ENCODE measurements at regions of chr6 and their contacts with region 1.

Region 1: GRCh38 chr6:41367700-41368099 is 32.3 kb downstream of the NCR2 start:
- DNase-seq: peak; percentile 68
- H3K27ac ChIP-seq: no peak overlapping the region
- CTCF ChIP-seq: peak; percentile 50

Region 2: DNA sequence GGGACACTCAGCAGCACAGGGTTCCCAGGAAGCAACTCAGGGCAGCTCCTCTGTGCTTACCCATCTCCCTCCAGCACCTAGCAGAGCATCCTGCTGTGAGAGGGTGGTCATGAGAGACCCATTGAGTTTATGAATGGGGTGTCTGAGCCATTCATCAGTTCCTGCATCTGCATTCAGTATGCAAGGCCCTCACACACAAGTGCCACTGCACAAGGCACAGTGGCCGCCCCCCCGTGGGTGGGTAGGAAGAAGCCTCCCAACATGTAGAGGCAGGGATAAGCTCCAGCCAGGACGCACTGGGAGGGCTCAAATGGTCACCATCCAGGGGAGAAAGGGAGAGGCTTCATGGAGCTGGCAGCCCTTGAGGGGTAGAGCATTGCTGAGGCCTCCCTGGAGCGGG is 221.5 kb after region 1 on chr6:
- CTCF ChIA-PET with region 1: interaction called, 12 read pairs
- POLR2A ChIA-PET with region 1: no interaction called
- DNase-seq: no peak
- H3K27ac ChIP-seq: no peak overlapping the region
- CTCF ChIP-seq: no peak

Region 3: GRCh38 chr6:41683510-41684310 is 316.0 kb after region 1 on chr6:
- CTCF ChIA-PET with region 1: interaction called, 14 read pairs
- POLR2A ChIA-PET with region 1: no interaction called
- DNase-seq: peak; percentile 74
- H3K27ac ChIP-seq: peak overlapping the region; percentile 56
- CTCF ChIP-seq: peak; percentile 88

Region 4: GRCh38 chr6:42122718-42123151 is 755.0 kb after region 1 on chr6:
- CTCF ChIA-PET with region 1: no interaction called
- POLR2A ChIA-PET with region 1: no interaction called
- DNase-seq: peak; percentile 89
- H3K27ac ChIP-seq: peak overlapping the region; percentile 95
- CTCF ChIP-seq: no peak

Measured in RWPE1 (cell line).